ENCODE measurements at regions of chr13 and their contacts with region 1.

Region 1: GRCh38 chr13:114281351-114282040 is at the start of gene UPF3A:
- DNase-seq: peak; percentile 87
- H3K4me3 ChIP-seq: peak within 1 kb of the TSS; percentile 84 to 97 (median 91)
- H3K27ac ChIP-seq: peak within 1 kb of the TSS; percentile 94
- H3K4me1 ChIP-seq: peaks cover 9% of the 10 kb centered on the region
- H3K27me3 ChIP-seq: no peaks in the 10 kb centered on the region
- CTCF ChIP-seq: no peak
- total RNA-seq, gene UPF3A: 17.8 to 36.3 TPM

Region 2: DNA sequence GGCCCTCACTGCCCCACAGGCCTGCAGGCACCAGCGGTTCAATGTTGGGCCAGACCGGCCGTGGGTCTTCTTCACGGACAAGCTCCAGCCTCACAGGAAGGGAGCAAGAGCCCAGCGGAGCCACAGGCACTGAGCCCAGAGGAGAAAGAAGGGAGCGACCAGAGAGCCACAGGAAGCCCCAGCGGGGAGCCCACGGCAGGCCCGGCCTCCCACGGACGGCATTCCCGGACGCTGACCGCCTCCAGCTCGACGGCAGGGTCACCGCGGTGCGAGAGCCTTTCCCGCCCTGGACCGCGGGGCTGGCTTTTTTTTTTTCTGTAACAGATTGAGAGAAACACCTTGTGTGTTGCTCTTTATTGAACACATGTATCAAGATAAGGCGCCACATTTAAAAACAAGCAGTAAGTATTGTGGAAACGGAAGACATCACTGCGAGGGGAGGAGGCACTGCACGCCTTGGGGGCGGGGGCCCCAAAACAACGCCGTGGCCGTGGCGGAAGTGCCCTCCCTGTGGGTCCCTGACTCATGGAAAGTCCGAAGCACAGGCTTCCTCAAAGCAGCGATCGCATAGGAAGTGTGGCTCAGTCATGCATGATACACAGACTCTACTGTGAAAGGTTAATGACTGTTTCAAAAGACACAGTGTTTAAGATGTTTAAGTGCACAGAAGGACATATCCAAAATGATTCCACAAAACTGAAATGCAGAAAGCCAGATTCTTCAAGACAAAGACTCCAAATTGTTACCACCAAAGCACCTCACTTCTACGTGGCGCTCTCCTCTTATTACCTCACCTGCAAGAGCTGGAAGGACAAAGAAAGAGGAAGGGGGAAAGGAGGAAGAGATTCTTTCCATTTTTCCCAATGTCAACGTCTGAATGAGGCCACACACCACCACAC is 152.6 kb before region 1 on chr13:
- CTCF ChIA-PET with region 1: no interaction called
- dilution Hi-C with region 1: no loop called
- in situ Hi-C with region 1: no loop called
- intact Hi-C with region 1: no loop called
- DNase-seq: no peak
- H3K4me3 ChIP-seq: no peak overlapping the region
- H3K27ac ChIP-seq: no peak overlapping the region
- H3K4me1 ChIP-seq: peaks cover 16% of the 10 kb centered on the region
- H3K27me3 ChIP-seq: no peaks in the 10 kb centered on the region
- CTCF ChIP-seq: no peak

Region 3: DNA sequence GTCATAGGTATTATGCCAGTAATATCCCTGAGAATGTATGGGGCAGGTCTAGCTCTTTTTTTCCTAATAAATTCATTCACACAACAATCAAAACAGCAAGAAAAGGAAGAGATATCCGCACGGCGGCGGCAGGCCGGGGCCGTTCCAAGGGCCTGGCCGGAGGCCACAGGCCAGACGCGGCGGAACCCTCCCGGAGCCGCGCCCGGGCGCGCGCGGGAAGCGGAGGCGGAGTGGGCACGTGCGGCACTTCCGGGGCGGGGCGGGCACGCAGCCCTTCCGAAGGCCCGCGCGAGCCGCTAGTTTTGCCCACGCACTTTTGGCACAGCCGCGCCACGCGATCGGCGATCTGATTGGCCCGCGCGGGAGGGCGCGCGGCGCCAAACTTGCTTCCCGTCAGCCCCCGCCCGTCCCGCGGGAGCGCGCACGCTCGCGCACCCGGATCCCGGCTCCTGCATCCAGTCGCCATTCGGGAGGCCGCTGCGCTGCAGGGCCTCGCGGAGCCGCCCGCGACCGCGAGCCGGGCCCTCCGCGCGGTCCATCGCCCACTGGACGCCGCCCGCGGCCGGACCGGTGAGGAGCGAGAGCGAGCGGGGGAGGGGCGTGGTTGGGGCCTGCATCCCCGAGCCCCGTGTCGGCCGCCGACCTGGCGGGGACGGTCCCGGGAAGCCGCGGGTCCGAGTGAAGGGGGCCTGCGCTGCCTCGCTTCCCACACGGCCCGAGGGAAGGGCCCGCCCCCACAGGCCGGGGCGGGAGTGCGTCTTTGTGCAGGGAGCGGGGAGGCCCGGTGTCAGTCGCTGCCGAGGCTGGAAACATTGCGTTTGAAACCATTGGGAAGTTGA is 32.8 kb after region 1 on chr13 and contains the start of gene CHAMP1:
- CTCF ChIA-PET with region 1: interaction called, 7 read pairs
- dilution Hi-C with region 1: no loop called
- in situ Hi-C with region 1: no loop called
- intact Hi-C with region 1: loop called (anchors 2 kb)
- DNase-seq: peak; percentile 93
- H3K4me3 ChIP-seq: peak within 1 kb of the TSS; percentile 82 to 88 (median 87)
- H3K27ac ChIP-seq: peak within 1 kb of the TSS; percentile 81
- H3K4me1 ChIP-seq: peaks cover 10% of the 10 kb centered on the region
- H3K27me3 ChIP-seq: no peaks in the 10 kb centered on the region
- CTCF ChIP-seq: no peak
- total RNA-seq, gene CHAMP1: 8.2 to 21.0 TPM

Measured in mammary epithelial cell (primary cell).